Natural killer cell (primary cell): ENCODE measurements at regions of chr12 and their contacts with region 1.

Region 1: DNA sequence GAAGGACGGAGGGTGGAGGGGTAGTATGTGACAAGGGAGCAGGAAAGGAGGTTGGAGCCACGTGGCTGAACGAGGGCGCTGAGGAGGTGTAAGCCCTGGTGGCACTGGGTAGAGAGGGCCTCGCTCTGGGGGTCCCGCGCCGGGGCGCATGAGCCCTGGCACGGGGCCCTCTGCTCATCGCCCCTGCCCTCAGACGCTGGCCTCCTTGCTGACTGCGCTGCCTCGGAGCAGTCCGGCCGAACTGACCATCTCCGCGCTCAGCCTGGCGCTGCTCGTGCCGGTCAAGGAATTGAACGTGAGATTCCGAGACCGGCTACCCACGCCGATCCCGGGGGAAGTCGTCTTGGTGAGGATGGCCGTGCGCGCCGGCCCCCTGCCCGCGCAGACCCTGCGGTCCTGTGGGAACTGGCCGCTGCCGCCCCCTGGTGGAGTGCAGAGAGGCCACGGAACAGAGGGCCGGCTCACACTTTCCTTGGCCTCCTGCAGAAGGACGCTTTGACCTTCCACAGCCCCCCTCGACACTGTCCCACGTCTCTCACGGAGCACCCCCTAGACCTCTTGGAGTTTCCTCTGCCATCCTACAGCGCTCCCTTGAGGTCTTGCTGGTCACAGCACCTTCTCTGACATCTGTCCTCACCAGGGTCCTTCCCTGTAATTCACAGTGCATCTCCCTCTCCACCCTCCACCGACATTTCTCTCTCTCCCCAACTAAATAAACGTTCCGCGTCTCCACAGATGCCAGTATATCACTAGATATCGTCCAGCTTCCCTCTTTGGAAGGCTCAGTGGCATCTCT is 10.5 kb downstream of the ARHGEF25 start:
- DNase-seq: peak; percentile 61 to 74
- ATAC-seq: peak; percentile 73 to 83 (median 75)
- H3K4me3 ChIP-seq: peak overlapping the region; percentile 28
- H3K4me3 Mint-ChIP-seq: peak overlapping the region; percentile 84
- H3K27ac ChIP-seq: no peak overlapping the region
- H3K27ac Mint-ChIP-seq: peak overlapping the region in 1 of 2 donors; percentile 63
- H3K4me1 ChIP-seq: peaks cover 30% of the 10 kb centered on the region
- H3K4me1 Mint-ChIP-seq: peaks cover 32% of the 10 kb centered on the region in 2 donors
- H3K27me3 ChIP-seq: peaks cover 76% of the 10 kb centered on the region
- H3K27me3 Mint-ChIP-seq: peaks cover 75 to 79% of the 10 kb centered on the region in 2 donors
- CTCF ChIP-seq: peak; percentile 96

Region 2: GRCh38 chr12:57462251-57462911 is 159.3 kb before region 1 on chr12:
- intact Hi-C with region 1: loop called (anchors 1 kb)
- DNase-seq: peak; percentile 80 to 95
- ATAC-seq: peak; percentile 66 to 83 (median 66)
- H3K4me3 ChIP-seq: peak overlapping the region; percentile 34
- H3K4me3 Mint-ChIP-seq: peak overlapping the region; percentile 93
- H3K27ac ChIP-seq: no peak overlapping the region
- H3K27ac Mint-ChIP-seq: peak overlapping the region; percentile 76 to 96
- H3K4me1 ChIP-seq: peaks cover 47% of the 10 kb centered on the region
- H3K4me1 Mint-ChIP-seq: peaks cover 59 to 63% of the 10 kb centered on the region in 2 donors
- H3K27me3 ChIP-seq: peaks cover 6% of the 10 kb centered on the region
- H3K27me3 Mint-ChIP-seq: peaks cover 0 to 15% of the 10 kb centered on the region in 2 donors
- CTCF ChIP-seq: peak; percentile 93

Region 3: GRCh38 chr12:57583008-57583831 is 38.5 kb before region 1 on chr12:
- intact Hi-C with region 1: loop called (anchors 1 kb)
- DNase-seq: peak; percentile 45 to 90
- ATAC-seq: peak; percentile 99 to 100 (median 100)
- H3K4me3 ChIP-seq: no peak overlapping the region
- H3K4me3 Mint-ChIP-seq: no peak overlapping the region
- H3K27ac ChIP-seq: no peak overlapping the region
- H3K27ac Mint-ChIP-seq: peak overlapping the region in 1 of 2 donors; percentile 24
- H3K4me1 ChIP-seq: no peaks in the 10 kb centered on the region
- H3K4me1 Mint-ChIP-seq: peaks cover 8 to 9% of the 10 kb centered on the region in 2 donors
- H3K27me3 ChIP-seq: peaks cover 2% of the 10 kb centered on the region
- H3K27me3 Mint-ChIP-seq: peaks cover 13 to 20% of the 10 kb centered on the region in 2 donors
- CTCF ChIP-seq: peak; percentile 90